ENCODE measurements at regions of chr17 and their contacts with region 1.

Region 1: DNA sequence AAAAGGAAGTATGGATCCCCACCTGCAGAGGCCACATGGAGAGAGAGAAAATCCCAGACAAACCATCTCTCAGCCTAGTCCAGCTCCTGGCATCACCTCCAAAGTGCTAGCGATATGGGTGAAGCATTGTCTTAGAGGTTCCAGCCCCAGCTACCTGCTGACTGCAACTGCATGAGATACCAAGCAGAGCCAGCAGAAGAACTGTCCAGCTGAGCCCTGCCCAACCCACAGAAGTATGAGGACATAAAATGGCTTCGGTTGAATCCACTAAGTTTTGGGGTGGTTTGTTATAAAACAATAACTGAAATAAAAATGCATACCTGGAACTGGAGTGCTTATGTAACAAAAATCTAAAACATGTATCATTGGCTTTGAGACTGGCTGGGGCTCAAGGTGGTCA is 20.4 kb upstream of the SLFN5 start:
- DNase-seq: no peak
- H3K4me3 ChIP-seq: no peak overlapping the region
- H3K4me3 Mint-ChIP-seq: no peak overlapping the region
- H3K27ac ChIP-seq: no peak overlapping the region
- H3K27ac Mint-ChIP-seq: peak overlapping the region in 1 of 8 donors; percentile 25
- H3K4me1 ChIP-seq: peaks cover 31% of the 10 kb centered on the region
- H3K4me1 Mint-ChIP-seq: peaks cover 43 to 62% (median 57%) of the 10 kb centered on the region in 3 donors
- H3K27me3 ChIP-seq: no peaks in the 10 kb centered on the region
- H3K27me3 Mint-ChIP-seq: no peaks in the 10 kb centered on the region

Region 2: DNA sequence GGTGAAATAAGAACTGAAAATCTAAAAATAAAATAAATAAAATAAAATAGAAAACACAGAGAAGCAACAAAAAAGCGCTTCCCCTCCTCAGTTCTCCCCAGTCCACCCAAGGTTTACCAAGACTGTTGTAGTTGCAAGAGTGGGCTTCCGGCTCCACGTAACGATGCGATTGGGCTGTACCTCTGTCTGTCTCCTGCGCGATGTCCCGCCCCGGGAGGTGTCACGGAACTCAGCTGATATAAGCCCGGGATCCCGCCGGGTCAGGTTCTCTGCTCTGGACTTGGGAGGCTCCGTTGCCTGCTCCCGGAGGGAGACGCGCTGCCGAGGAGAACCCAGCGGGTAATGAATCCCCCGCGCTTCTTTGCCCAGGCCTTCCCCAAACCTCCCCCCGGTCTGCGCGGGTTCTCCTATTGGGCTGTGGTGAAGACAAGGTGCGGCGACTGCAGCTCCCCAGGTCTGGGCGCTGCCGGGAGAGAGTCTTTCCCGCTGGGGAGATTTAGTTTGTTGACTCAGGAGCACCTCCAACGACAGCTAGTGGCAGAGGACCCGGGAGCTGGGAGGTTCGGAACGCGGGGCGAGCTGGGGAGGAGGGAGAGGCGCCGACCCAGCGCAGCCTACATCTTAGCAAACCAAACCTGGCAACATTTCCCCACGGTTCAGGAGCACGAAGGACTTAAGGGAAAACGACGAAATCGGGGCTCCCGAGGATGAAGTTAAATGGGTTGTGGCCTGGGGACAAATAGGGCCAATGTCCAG is 20.5 kb after region 1 on chr17 and contains the start of gene SLFN5:
- CTCF ChIA-PET with region 1: interaction called, 13 read pairs
- POLR2A ChIA-PET with region 1: interaction called, 5 read pairs
- DNase-seq: peak; percentile 88 to 96 (median 92)
- H3K4me3 ChIP-seq: peak within 1 kb of the TSS; percentile 99
- H3K4me3 Mint-ChIP-seq: peak within 1 kb of the TSS; percentile 97 to 100 (median 99)
- H3K27ac ChIP-seq: peak within 1 kb of the TSS; percentile 96
- H3K27ac Mint-ChIP-seq: peak within 1 kb of the TSS; percentile 98 to 100 (median 99)
- H3K4me1 ChIP-seq: peaks cover 33% of the 10 kb centered on the region
- H3K4me1 Mint-ChIP-seq: peaks cover 64 to 70% (median 68%) of the 10 kb centered on the region in 3 donors
- H3K27me3 ChIP-seq: no peaks in the 10 kb centered on the region
- H3K27me3 Mint-ChIP-seq: peaks cover 0 to 8% of the 10 kb centered on the region in 2 donors
- total RNA-seq, gene SLFN5: 28.6 to 30.2 TPM

Measured in CD8-positive, alpha-beta memory T cell (primary cell).